ENCODE measurements at regions of chr4 and their contacts with region 1.

Region 1: DNA sequence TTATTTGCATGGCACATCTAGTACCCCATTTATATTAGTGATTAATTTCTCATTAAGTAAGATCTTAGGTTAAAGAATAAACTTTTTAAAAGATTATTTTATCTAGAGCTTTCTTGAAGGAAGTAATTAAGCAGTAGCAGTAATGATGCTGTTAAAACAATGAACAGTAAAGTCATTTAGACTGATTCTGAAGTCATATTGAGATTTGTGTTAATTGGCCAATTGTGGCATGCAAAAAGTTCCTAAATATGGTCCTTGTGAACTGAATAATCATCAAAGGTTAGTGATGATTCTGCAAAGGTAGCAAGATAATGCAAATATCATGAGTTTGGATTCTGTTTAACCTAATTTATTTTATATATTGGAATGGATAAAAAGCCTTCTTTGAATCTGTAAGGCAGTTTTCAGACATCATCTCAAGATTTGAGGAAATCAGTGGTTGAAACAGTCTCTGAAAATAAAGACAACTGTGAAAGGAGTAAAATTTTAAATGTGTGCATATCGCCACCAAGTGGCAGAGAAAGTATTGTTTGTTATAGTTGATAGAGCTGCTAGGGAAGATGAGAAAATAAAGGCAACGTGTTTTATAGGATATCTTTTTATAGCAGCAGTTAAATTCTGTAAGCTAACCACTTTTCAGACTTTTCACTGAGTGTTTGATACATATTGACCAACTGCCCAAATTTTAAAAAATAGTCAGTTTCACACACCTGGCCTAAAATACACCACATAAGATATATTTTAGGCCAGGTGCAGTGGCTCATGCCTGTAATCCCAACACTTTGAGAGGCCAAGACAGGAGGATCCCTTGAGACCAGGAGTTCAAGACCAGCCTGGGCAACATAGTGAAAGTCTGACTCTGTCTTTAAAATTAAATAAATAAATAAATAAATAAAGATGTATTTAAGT is 79.6 kb downstream of the CCKAR start:
- DNase-seq: peak; percentile 19
- H3K4me3 Mint-ChIP-seq: no peak overlapping the region
- H3K27ac Mint-ChIP-seq: no peak overlapping the region
- H3K4me1 Mint-ChIP-seq: peaks cover 25% of the 10 kb centered on the region
- H3K27me3 Mint-ChIP-seq: no peaks in the 10 kb centered on the region

Region 2: GRCh38 chr4:26061248-26061986 is 349.2 kb before region 1 on chr4:
- intact Hi-C with region 1: loop called (anchors 1 kb)
- DNase-seq: no peak
- H3K4me3 Mint-ChIP-seq: no peak overlapping the region
- H3K27ac Mint-ChIP-seq: no peak overlapping the region
- H3K4me1 Mint-ChIP-seq: peaks cover 32% of the 10 kb centered on the region
- H3K27me3 Mint-ChIP-seq: no peaks in the 10 kb centered on the region

Region 3: GRCh38 chr4:26288355-26288909 is 122.2 kb before region 1 on chr4:
- intact Hi-C with region 1: no loop called
- DNase-seq: peak; percentile 20
- H3K4me3 Mint-ChIP-seq: peak overlapping the region; percentile 25
- H3K27ac Mint-ChIP-seq: peak overlapping the region; percentile 61
- H3K4me1 Mint-ChIP-seq: peaks cover 32% of the 10 kb centered on the region
- H3K27me3 Mint-ChIP-seq: no peaks in the 10 kb centered on the region

Region 4: DNA sequence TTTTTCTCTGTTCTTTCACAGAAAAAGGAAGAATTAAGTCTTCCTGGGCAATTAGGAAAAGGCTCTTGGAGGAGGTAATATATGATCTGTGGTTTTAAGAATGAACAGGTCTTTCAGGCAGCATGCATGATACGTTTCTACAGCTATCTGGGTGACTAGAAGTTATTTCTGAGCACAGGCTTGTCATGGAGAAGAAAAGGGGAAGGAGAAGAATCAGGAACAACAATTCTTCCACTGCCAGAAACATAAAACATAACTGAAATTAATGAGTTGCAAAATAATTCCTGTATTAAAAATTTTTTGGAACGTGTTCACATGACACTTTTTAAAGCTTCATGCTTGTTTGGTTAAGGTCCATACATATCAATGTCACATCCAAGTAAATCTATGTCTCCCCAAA is 432.3 kb after region 1 on chr4:
- intact Hi-C with region 1: no loop called
- DNase-seq: no peak
- H3K4me3 Mint-ChIP-seq: no peak overlapping the region
- H3K27ac Mint-ChIP-seq: no peak overlapping the region
- H3K4me1 Mint-ChIP-seq: no peaks in the 10 kb centered on the region
- H3K27me3 Mint-ChIP-seq: peaks cover 12% of the 10 kb centered on the region